ENCODE measurements at regions of chr14 and their contacts with region 1.

Region 1: GRCh38 chr14:92748259-92749016 is at the start of gene LGMN:
- DNase-seq: no peak
- ATAC-seq: peak; percentile 92
- H3K4me3 ChIP-seq: peak within 1 kb of the TSS; percentile 81
- H3K27ac ChIP-seq: peak within 1 kb of the TSS; percentile 45
- H3K4me1 ChIP-seq: peaks cover 31% of the 10 kb centered on the region
- H3K27me3 ChIP-seq: no peaks in the 10 kb centered on the region
- CTCF ChIP-seq: no peak
- EP300 ChIP-seq: no peak; a peak in 1 of 4 replicates
- POLR2A ChIP-seq: peak; percentile 96
- RAD21 ChIP-seq: no peak
- polyA plus RNA-seq, gene LGMN: 0.71 to 1.1 TPM

Region 2: GRCh38 chr14:92704036-92704804 is 44.2 kb before region 1 on chr14:
- CTCF ChIA-PET with region 1: interaction called, 3 read pairs
- POLR2A ChIA-PET with region 1: interaction called, 6 read pairs
- RAD21 ChIA-PET with region 1: interaction called, 3 read pairs
- SMC1A ChIA-PET with region 1: interaction called, 3 read pairs
- in situ Hi-C with region 1: no loop called
- intact Hi-C with region 1: loop called (anchors 5 kb)
- DNase-seq: peak; percentile 92
- ATAC-seq: peak; percentile 97
- H3K4me3 ChIP-seq: 0 out of 2 replicates have a peak overlapping the region, but pooled peaks have one; percentile 2
- H3K27ac ChIP-seq: peak overlapping the region; percentile 29; the same call in 1 of the 2 replicates
- H3K4me1 ChIP-seq: peaks cover 26% of the 10 kb centered on the region
- H3K27me3 ChIP-seq: no peaks in the 10 kb centered on the region
- CTCF ChIP-seq: no peak
- EP300 ChIP-seq: peak; percentile 50 to 70; a peak in 3 of 4 replicates
- POLR2A ChIP-seq: no peak
- RAD21 ChIP-seq: no peak

Region 3: DNA sequence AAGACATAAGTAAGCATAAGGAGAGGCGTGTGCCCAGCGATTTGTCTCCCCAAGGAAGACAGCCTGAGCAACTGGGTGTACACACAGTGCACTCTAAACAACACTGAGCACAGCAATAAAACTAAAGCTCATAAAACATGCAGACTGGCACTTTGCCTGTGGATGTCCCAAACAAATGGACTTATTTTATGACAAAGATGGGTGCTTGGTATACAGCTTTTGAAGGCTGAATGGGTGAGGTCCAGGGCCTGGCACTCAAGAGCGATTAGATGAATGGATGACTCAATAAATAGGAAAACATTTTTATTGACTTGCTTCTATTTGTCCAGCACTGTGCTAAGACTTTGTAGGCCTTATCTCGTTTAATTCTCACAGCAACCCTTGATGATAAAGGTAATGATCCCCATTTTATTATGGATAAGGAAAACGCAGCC is 28.5 kb before region 1 on chr14:
- CTCF ChIA-PET with region 1: interaction called, 11 read pairs
- POLR2A ChIA-PET with region 1: no interaction called
- RAD21 ChIA-PET with region 1: interaction called, 10 read pairs
- SMC1A ChIA-PET with region 1: interaction called, 6 read pairs
- in situ Hi-C with region 1: no loop called
- intact Hi-C with region 1: no loop called
- DNase-seq: no peak
- ATAC-seq: no peak
- H3K4me3 ChIP-seq: no peak overlapping the region
- H3K27ac ChIP-seq: no peak overlapping the region
- H3K4me1 ChIP-seq: no peaks in the 10 kb centered on the region
- H3K27me3 ChIP-seq: no peaks in the 10 kb centered on the region
- CTCF ChIP-seq: no peak
- EP300 ChIP-seq: no peak
- POLR2A ChIP-seq: no peak
- RAD21 ChIP-seq: no peak

Region 4: GRCh38 chr14:92759300-92759678 is 10.9 kb after region 1 on chr14:
- CTCF ChIA-PET with region 1: interaction called, 4 read pairs
- POLR2A ChIA-PET with region 1: interaction called, 10 read pairs
- RAD21 ChIA-PET with region 1: interaction called, 8 read pairs
- SMC1A ChIA-PET with region 1: interaction called, 32 read pairs
- in situ Hi-C with region 1: no loop called
- intact Hi-C with region 1: no loop called
- DNase-seq: no peak
- ATAC-seq: peak; percentile 69
- H3K4me3 ChIP-seq: no peak overlapping the region
- H3K27ac ChIP-seq: peak overlapping the region; percentile 34
- H3K4me1 ChIP-seq: peaks cover 23% of the 10 kb centered on the region
- H3K27me3 ChIP-seq: no peaks in the 10 kb centered on the region
- CTCF ChIP-seq: no peak
- EP300 ChIP-seq: no peak
- POLR2A ChIP-seq: no peak
- RAD21 ChIP-seq: no peak

Region 5: GRCh38 chr14:92768795-92769194 is 20.4 kb after region 1 on chr14:
- CTCF ChIA-PET with region 1: interaction called, 10 read pairs
- POLR2A ChIA-PET with region 1: interaction called, 9 read pairs
- RAD21 ChIA-PET with region 1: interaction called, 21 read pairs
- SMC1A ChIA-PET with region 1: interaction called, 67 read pairs
- in situ Hi-C with region 1: no loop called
- intact Hi-C with region 1: no loop called
- DNase-seq: no peak
- ATAC-seq: peak; percentile 16; the same call in 2 of the 3 replicates
- H3K4me3 ChIP-seq: no peak overlapping the region
- H3K27ac ChIP-seq: no peak overlapping the region
- H3K4me1 ChIP-seq: peaks cover 28% of the 10 kb centered on the region
- H3K27me3 ChIP-seq: peaks cover 0 to 2% of the 10 kb centered on the region in 2 experiments; a peak in 1 of 4 replicates
- CTCF ChIP-seq: no peak
- EP300 ChIP-seq: no peak
- POLR2A ChIP-seq: no peak
- RAD21 ChIP-seq: no peak

Region 6: GRCh38 chr14:92774572-92774971 is 26.1 kb after region 1 on chr14:
- CTCF ChIA-PET with region 1: interaction called, 10 read pairs
- POLR2A ChIA-PET with region 1: interaction called, 4 read pairs
- RAD21 ChIA-PET with region 1: interaction called, 17 read pairs
- SMC1A ChIA-PET with region 1: interaction called, 67 read pairs
- in situ Hi-C with region 1: no loop called
- intact Hi-C with region 1: no loop called
- DNase-seq: no peak
- ATAC-seq: no peak
- H3K4me3 ChIP-seq: no peak overlapping the region
- H3K27ac ChIP-seq: no peak overlapping the region
- H3K4me1 ChIP-seq: peaks cover 30% of the 10 kb centered on the region
- H3K27me3 ChIP-seq: peaks cover 0 to 2% of the 10 kb centered on the region in 2 experiments; a peak in 2 of 4 replicates
- CTCF ChIP-seq: no peak
- EP300 ChIP-seq: no peak
- POLR2A ChIP-seq: no peak
- RAD21 ChIP-seq: no peak

Region 7: GRCh38 chr14:92997343-92998061 is 249.1 kb after region 1 on chr14:
- CTCF ChIA-PET with region 1: no interaction called
- POLR2A ChIA-PET with region 1: no interaction called
- RAD21 ChIA-PET with region 1: no interaction called
- SMC1A ChIA-PET with region 1: no interaction called
- in situ Hi-C with region 1: no loop called
- intact Hi-C with region 1: no loop called
- DNase-seq: no peak
- ATAC-seq: no peak
- H3K4me3 ChIP-seq: no peak overlapping the region
- H3K27ac ChIP-seq: no peak overlapping the region
- H3K4me1 ChIP-seq: no peaks in the 10 kb centered on the region
- H3K27me3 ChIP-seq: no peaks in the 10 kb centered on the region
- CTCF ChIP-seq: no peak
- EP300 ChIP-seq: no peak
- POLR2A ChIP-seq: no peak
- RAD21 ChIP-seq: no peak

Measured in GM12878 (cell line).